PC-9 (cell line): ENCODE measurements at regions of chr1 and their contacts with region 1.

Region 1: GRCh38 chr1:114564141-114564540 is 17.3 kb downstream of the BCAS2 start:
- DNase-seq: no peak
- H3K4me3 ChIP-seq: no peak overlapping the region
- H3K27ac ChIP-seq: no peak overlapping the region
- H3K4me1 ChIP-seq: no peaks in the 10 kb centered on the region
- H3K27me3 ChIP-seq: no peaks in the 10 kb centered on the region
- CTCF ChIP-seq: no peak

Region 2: GRCh38 chr1:113369040-113369439 is 1195.1 kb before region 1 on chr1:
- CTCF ChIA-PET with region 1: no interaction called
- POLR2A ChIA-PET with region 1: interaction called, 13 read pairs
- intact Hi-C with region 1: no loop called
- DNase-seq: no peak
- H3K4me3 ChIP-seq: no peak overlapping the region
- H3K27ac ChIP-seq: no peak overlapping the region
- H3K4me1 ChIP-seq: no peaks in the 10 kb centered on the region
- H3K27me3 ChIP-seq: no peaks in the 10 kb centered on the region
- CTCF ChIP-seq: no peak

Region 3: DNA sequence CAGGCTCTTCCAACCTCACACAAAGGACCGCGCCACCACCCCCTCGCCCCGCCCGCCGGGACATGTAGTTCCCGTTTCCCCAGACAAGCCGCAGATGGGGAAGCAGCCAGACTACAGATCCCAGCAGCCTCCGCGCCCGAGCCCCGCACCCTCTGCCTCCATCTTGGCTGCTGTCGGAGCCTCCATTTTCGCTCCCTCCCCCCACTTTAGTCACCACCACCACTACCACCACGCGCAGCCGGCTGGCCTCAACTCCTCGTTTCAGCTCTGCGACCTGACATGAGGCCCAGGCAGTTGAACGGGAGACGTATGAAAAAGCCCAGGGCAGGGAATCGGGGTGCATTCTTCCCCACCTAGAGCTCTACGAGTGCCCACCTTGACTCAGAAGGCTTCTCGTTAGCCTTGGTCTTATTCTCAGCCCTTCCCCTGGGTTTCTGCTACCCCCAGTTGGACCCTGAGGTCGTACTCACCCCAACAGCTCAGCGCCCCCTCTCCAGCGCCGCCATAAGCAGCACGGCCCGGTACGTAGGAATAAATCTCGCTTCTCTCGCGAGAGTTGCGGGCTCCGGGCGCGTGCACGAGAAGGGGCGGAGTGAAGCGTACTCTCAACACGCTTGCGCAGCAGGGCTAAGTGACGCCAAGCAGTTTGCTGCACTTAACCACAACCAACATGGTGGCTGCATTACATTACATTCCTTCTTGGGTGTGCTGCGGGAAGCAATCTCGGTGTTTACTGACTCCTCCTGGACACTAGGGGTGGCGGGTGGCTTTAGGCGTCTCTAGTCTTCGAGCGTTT is 193.5 kb after region 1 on chr1 and contains the start of gene CSDE1:
- CTCF ChIA-PET with region 1: no interaction called
- POLR2A ChIA-PET with region 1: no interaction called
- intact Hi-C with region 1: no loop called
- DNase-seq: peak; percentile 95 to 99
- H3K4me3 ChIP-seq: peak within 1 kb of the TSS; percentile 79
- H3K27ac ChIP-seq: peak within 1 kb of the TSS; percentile 87
- H3K4me1 ChIP-seq: peaks cover 34% of the 10 kb centered on the region
- H3K27me3 ChIP-seq: no peaks in the 10 kb centered on the region
- CTCF ChIP-seq: peak; percentile 64; the same call in 1 of the 2 replicates
- total RNA-seq, gene CSDE1: 536 and 650 TPM in 2 replicates